BJ (cell line): ENCODE measurements at regions of chr20 and their contacts with region 1.

Region 1: GRCh38 chr20:19784511-19785172 is 26.6 kb downstream of the RIN2 start:
- DNase-seq: no peak
- H3K4me3 ChIP-seq: no peak overlapping the region
- H3K27me3 ChIP-seq: no peaks in the 10 kb centered on the region
- CTCF ChIP-seq: peak; percentile 69

Region 2: GRCh38 chr20:19692685-19693119 is 91.9 kb before region 1 on chr20:
- CTCF ChIA-PET with region 1: interaction called, 13 read pairs
- POLR2A ChIA-PET with region 1: no interaction called
- DNase-seq: no peak
- H3K4me3 ChIP-seq: no peak overlapping the region
- H3K27me3 ChIP-seq: no peaks in the 10 kb centered on the region
- CTCF ChIP-seq: peak; percentile 86

Region 3: DNA sequence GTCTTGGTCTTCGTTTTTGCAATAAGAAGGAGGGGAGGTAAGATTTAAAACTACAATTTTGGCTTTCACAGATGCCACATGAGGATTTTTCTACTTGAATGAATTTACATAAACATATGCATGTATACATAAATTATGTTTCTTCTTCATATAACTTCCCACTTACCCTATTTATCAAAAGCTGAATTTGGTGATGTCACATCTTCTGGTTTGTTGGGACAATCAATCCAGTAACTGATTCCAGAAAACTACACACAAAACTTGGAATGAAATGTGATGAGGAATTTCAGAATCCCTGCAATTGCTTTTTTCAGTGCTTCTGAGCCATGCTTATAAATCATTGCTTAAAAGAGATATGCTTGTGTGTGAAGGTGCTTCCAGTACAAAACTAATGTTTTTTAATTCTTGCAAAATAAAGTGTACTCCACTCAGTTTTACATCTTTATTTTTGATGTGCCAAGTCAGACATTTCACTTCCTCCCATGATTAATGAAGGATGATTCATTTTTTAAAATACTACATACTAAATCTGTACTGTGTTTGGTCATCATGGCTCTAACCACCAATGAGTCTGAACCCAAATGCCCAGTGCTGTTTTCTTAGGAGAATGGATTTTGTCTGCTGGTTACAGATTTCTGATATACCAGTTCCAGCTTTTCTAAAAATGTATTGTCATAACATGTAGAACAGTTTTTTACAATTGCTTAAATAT is 58.7 kb before region 1 on chr20:
- CTCF ChIA-PET with region 1: no interaction called
- POLR2A ChIA-PET with region 1: no interaction called
- DNase-seq: no peak
- H3K4me3 ChIP-seq: no peak overlapping the region
- H3K27me3 ChIP-seq: no peaks in the 10 kb centered on the region
- CTCF ChIP-seq: no peak

Region 4: GRCh38 chr20:19757487-19758132 is 27.0 kb before region 1 on chr20:
- CTCF ChIA-PET with region 1: interaction called, 12 read pairs
- POLR2A ChIA-PET with region 1: interaction called, 13 read pairs
- DNase-seq: peak; percentile 71
- H3K4me3 ChIP-seq: peak overlapping the region; percentile 71
- H3K27me3 ChIP-seq: no peaks in the 10 kb centered on the region
- CTCF ChIP-seq: no peak

Region 5: DNA sequence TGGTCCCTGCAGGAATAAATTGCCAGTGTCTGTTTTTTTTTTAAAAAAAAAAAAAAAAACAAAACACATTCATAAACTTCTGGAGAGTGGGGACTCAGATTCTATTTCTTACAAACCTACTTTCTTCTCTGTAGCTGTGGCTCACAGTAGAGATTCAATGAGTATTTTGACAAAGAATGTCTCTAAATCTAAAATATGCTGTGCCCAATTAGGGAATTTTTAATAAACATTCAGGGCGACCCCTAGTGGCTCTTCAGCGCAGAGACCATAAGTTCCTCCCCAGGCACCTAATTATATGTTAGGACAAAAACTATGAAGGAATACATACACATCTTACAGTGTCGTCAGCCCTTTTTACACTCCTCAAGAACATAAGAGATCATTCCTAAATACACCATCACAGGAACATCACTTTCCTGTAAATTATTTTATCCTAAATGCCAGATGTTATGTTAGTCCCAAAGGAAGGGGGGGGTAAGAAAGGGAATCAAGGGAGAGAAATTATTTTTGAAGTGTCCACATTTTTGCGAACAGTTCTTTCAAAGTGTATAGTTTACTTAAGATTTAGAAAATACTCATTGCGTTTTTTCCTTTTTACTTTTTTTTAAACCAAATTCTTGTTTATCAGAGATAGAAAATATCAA is 210.7 kb after region 1 on chr20:
- CTCF ChIA-PET with region 1: interaction called, 30 read pairs
- POLR2A ChIA-PET with region 1: no interaction called
- DNase-seq: no peak
- H3K4me3 ChIP-seq: no peak overlapping the region
- H3K27me3 ChIP-seq: no peaks in the 10 kb centered on the region
- CTCF ChIP-seq: peak; percentile 80